ENCODE measurements at regions of chr5 and their contacts with region 1.

Region 1: GRCh38 chr5:72307968-72308852 is 11.8 kb downstream of the MRPS27 start:
- DNase-seq: peak; percentile 98
- H3K4me3 ChIP-seq: peak overlapping the region; percentile 82
- H3K27ac ChIP-seq: peak overlapping the region; percentile 97
- H3K4me1 ChIP-seq: peaks cover 33% of the 10 kb centered on the region
- H3K27me3 ChIP-seq: no peaks in the 10 kb centered on the region
- CTCF ChIP-seq: peak; percentile 95

Region 2: DNA sequence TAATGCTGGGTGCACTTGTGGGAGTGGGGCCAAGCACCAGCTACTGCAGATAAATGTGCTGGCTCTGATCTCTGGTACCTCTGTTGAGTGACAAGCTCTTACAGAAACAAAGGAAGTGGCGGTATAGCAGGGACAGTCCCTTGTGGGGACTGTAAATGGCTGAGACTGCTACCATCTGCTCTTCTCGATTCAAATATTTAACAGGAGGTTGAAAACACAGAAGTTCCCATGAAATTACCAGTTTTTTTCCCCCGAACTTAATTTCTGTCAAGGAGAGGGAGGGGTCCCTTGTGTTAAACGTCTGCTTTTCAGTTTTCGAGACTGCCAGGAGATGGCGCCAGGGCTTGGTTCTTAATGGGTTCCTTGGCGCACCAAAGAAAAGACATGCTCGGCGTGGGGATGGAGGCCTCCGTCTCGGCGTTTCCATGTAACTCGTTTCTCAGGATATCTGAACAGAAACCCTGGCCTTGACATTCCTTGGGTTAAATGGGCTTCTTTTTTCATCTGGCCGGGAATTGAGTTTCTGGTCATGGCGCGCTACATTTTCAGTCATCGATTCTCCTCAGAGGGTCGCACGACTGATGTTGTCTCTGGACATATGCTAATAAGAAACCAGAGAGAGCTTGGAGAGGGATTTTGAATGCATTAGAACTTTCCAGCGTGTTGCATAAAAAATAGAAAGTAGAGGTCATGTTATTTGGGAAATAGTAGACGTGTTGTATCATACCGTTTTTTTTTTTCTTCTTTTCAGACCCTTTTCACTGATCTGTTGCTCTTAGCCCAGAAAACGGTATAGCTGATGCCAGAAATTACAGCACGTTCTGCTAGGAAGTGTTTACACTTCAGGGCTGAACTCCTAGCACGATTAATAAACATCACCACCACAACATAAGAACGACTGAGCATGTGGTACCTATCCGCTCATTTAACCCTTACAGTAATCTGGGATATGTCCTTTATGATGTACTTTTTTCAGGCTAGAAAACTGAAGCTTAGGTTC is 525.1 kb before region 1 on chr5:
- intact Hi-C with region 1: loop called (anchors 10 kb)
- DNase-seq: peak; percentile 80
- H3K4me3 ChIP-seq: peak overlapping the region; percentile 48
- H3K27ac ChIP-seq: peak overlapping the region; percentile 47
- H3K4me1 ChIP-seq: peaks cover 4% of the 10 kb centered on the region
- H3K27me3 ChIP-seq: no peaks in the 10 kb centered on the region
- CTCF ChIP-seq: peak; percentile 90

Region 3: DNA sequence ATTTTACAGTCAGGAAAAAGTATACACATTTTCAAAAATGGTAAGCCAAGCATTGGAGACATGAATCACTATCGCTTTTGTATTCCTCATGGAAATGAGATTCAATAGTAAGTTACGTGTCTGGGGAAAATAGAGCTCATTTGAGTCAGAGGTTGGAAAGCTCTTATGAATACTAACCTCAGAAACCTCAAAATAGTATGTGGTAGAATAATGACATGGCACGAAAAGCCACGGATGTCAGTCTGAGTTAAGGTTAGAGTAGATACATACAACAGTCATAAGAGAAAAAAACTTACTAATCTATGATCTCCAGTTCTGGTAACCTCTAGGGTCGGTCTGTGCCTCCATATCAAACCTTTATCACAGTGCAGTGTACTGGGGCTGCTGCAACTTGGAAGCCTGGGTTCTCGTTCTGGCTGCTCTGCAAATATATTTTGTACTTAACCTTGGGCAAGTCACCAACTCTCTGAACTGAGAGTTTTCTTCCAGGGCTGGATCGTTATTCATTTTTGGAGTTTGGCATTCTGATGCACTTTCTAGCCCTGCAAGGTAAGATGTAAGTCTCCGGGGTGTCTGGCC is 169.2 kb before region 1 on chr5:
- intact Hi-C with region 1: loop called (anchors 10 kb)
- DNase-seq: no peak
- H3K4me3 ChIP-seq: no peak overlapping the region
- H3K27ac ChIP-seq: peak overlapping the region; percentile 41
- H3K4me1 ChIP-seq: peaks cover 72% of the 10 kb centered on the region
- H3K27me3 ChIP-seq: no peaks in the 10 kb centered on the region
- CTCF ChIP-seq: no peak

Region 4: DNA sequence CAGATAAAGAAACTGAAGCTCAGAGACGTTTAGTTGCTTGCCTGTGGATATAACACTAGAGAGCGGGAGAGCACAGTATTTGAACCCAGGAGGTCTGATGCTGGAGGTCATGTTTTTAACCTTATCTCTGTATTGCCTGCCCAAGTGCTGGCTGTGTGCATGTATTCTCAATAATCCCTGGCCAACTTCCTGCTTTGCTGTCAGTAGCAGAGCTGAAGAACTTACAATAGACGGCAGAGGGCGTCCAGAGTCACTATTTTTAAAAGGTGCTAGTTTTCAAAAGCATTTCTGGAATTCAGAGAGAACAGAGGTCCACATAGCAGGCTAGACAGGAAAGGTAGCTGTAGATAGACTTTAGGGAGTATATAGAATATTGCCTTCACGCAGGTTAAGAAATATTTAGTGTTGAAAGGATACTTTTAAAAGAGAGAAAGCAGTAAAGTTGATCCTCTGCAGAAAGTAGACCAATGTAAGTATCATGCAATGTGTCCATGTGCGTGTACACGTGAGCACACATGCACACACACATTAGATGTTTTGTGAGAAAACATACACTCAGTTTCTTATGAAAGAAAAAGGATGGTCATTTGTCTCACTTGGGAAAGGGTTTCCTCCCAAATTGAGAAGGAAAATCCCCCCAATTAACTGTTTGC is 58.2 kb after region 1 on chr5:
- intact Hi-C with region 1: no loop called
- DNase-seq: peak; percentile 46
- H3K4me3 ChIP-seq: no peak overlapping the region
- H3K27ac ChIP-seq: peak overlapping the region; percentile 55
- H3K4me1 ChIP-seq: peaks cover 18% of the 10 kb centered on the region
- H3K27me3 ChIP-seq: no peaks in the 10 kb centered on the region
- CTCF ChIP-seq: peak; percentile 87

Region 5: DNA sequence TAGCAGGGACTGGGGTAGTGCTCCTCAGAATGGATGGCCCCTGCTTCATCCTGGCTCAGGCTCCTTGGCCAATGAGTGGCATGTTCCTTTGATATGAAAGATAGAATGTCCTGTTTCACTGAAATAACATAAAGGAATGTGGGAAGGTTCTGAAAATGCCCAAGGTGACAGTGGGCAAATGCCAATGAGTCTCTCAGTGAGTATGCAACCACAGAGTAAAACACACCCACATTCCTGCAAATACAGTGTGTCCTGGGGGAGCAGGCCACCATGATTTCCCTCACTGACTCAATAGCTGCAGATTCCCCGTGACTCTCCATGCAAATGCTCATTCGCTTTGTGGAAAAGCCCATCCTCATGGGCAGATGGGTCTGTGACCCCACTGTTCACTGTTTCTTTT is 162.6 kb after region 1 on chr5:
- intact Hi-C with region 1: no loop called
- DNase-seq: no peak
- H3K4me3 ChIP-seq: no peak overlapping the region
- H3K27ac ChIP-seq: no peak overlapping the region
- H3K4me1 ChIP-seq: peaks cover 46% of the 10 kb centered on the region
- H3K27me3 ChIP-seq: no peaks in the 10 kb centered on the region
- CTCF ChIP-seq: no peak

Measured in left ventricle myocardium inferior (tissue), 1 donor.